ENCODE measurements at regions of chr10 and their contacts with region 1.

Region 1: DNA sequence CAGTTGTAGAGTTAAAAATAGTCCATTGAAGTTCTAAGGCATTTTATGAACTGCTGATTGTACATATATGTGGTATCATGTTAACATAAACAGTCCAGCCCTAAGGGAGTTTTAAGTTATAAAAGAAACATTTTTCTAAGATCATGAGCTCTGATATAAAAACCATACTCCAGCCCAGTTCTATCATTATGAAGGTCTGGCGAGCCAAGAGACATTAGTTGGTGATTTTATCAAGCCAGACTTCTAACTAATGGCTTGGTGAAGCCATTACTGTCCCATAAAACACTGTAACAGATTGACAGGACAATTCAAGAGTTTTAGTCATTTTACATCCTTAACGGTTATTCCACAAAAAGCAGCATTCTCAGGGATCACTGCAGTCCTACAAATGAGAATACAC is 221.6 kb downstream of the RNLS start:
- DNase-seq: no peak
- ATAC-seq: no peak
- H3K4me3 Mint-ChIP-seq: no peak overlapping the region
- H3K27ac Mint-ChIP-seq: no peak overlapping the region
- H3K4me1 Mint-ChIP-seq: no peaks in the 10 kb centered on the region
- H3K27me3 Mint-ChIP-seq: no peaks in the 10 kb centered on the region
- CTCF ChIP-seq: no peak

Region 2: GRCh38 chr10:87565010-87565409 is 796.5 kb before region 1 on chr10:
- CTCF ChIA-PET with region 1: no interaction called
- POLR2A ChIA-PET with region 1: no interaction called
- intact Hi-C with region 1: no loop called
- DNase-seq: no peak
- ATAC-seq: no peak
- H3K4me3 Mint-ChIP-seq: no peak overlapping the region
- H3K27ac Mint-ChIP-seq: no peak overlapping the region
- H3K4me1 Mint-ChIP-seq: no peaks in the 10 kb centered on the region
- H3K27me3 Mint-ChIP-seq: peaks cover 24% of the 10 kb centered on the region
- CTCF ChIP-seq: no peak

Region 3: GRCh38 chr10:88343761-88344484 is 17.6 kb before region 1 on chr10:
- CTCF ChIA-PET with region 1: no interaction called
- POLR2A ChIA-PET with region 1: no interaction called
- intact Hi-C with region 1: loop called (anchors 2 kb)
- DNase-seq: no peak
- ATAC-seq: no peak
- H3K4me3 Mint-ChIP-seq: no peak overlapping the region
- H3K27ac Mint-ChIP-seq: no peak overlapping the region
- H3K4me1 Mint-ChIP-seq: peaks cover 29% of the 10 kb centered on the region
- H3K27me3 Mint-ChIP-seq: no peaks in the 10 kb centered on the region
- CTCF ChIP-seq: no peak

Region 4: DNA sequence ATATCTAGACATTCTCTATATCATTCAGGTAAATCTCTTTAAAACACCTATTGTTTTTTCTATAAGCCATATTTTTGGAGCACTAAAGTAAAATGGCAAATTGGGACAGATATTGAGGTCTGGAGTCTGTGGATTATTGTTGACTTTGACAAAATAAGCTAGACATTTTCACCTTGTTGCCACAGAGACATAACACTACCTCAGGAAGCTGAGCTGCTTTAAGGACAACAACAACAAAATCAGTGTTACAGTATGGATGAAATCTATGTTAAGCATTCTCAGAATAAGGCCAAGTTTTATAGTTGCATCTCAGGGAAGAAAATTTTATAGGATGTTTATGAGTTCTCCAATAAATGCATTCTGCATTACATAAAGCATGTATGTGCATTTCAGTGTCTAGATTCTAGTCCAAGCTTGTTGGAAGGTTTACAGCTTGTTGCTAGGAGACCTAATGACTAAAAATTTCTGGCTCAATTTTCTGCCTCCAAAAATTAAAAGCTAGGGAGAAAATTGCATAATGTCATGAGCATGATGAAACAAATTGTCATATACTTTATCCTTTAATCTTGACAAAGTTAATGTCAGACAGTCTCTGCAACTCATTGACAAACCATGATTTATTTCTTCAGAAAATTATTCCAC is 459.4 kb after region 1 on chr10:
- CTCF ChIA-PET with region 1: no interaction called
- POLR2A ChIA-PET with region 1: no interaction called
- intact Hi-C with region 1: no loop called
- DNase-seq: no peak
- ATAC-seq: no peak
- H3K4me3 Mint-ChIP-seq: no peak overlapping the region
- H3K27ac Mint-ChIP-seq: no peak overlapping the region
- H3K4me1 Mint-ChIP-seq: peaks cover 10% of the 10 kb centered on the region
- H3K27me3 Mint-ChIP-seq: peaks cover 4% of the 10 kb centered on the region
- CTCF ChIP-seq: no peak